ENCODE measurements at regions of chr11 and their contacts with region 1.

Region 1: GRCh38 chr11:85595285-85595884 is 31.8 kb downstream of the DLG2 start:
- DNase-seq: no peak
- ATAC-seq: peak in 1 of 4 donors; percentile 57
- H3K4me3 ChIP-seq: no peak overlapping the region
- H3K27ac ChIP-seq: no peak overlapping the region
- H3K4me1 ChIP-seq: no peaks in the 10 kb centered on the region
- H3K27me3 ChIP-seq: no peaks in the 10 kb centered on the region
- CTCF ChIP-seq: peak; percentile 43 to 78 (median 63)
- POLR2A ChIP-seq: no peak

Region 2: GRCh38 chr11:85464283-85464682 is 131.1 kb before region 1 on chr11:
- intact Hi-C with region 1: loop called in 1 of 10 experiments (anchors 5 kb)
- DNase-seq: no peak
- ATAC-seq: no peak
- H3K4me3 ChIP-seq: no peak overlapping the region
- H3K27ac ChIP-seq: no peak overlapping the region
- H3K4me1 ChIP-seq: no peaks in the 10 kb centered on the region
- H3K27me3 ChIP-seq: no peaks in the 10 kb centered on the region
- CTCF ChIP-seq: peak in 8 of 12 donors; percentile 11 to 49 (median 25)
- POLR2A ChIP-seq: no peak

Region 3: DNA sequence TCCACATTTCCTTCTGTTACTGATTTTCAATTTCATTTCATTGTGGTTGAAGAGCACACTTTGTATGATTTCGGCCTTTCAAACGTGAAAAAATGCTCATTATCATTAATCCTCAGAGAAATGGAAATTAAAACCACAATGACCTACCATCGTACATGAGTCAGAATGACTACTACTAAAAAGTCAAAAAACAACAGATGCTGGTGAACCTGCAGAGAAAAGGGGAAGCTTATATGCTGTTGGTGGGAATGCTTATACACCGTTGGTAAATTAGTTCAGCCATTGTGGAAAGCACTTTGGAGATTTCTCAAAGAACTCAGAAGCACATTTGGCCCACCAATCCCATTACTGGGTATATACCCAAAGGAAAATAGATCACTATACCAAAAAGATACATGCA is 25.9 kb before region 1 on chr11:
- intact Hi-C with region 1: no loop called
- DNase-seq: no peak
- ATAC-seq: no peak
- H3K4me3 ChIP-seq: no peak overlapping the region
- H3K27ac ChIP-seq: no peak overlapping the region
- H3K4me1 ChIP-seq: no peaks in the 10 kb centered on the region
- H3K27me3 ChIP-seq: no peaks in the 10 kb centered on the region
- CTCF ChIP-seq: no peak
- POLR2A ChIP-seq: no peak

Region 4: DNA sequence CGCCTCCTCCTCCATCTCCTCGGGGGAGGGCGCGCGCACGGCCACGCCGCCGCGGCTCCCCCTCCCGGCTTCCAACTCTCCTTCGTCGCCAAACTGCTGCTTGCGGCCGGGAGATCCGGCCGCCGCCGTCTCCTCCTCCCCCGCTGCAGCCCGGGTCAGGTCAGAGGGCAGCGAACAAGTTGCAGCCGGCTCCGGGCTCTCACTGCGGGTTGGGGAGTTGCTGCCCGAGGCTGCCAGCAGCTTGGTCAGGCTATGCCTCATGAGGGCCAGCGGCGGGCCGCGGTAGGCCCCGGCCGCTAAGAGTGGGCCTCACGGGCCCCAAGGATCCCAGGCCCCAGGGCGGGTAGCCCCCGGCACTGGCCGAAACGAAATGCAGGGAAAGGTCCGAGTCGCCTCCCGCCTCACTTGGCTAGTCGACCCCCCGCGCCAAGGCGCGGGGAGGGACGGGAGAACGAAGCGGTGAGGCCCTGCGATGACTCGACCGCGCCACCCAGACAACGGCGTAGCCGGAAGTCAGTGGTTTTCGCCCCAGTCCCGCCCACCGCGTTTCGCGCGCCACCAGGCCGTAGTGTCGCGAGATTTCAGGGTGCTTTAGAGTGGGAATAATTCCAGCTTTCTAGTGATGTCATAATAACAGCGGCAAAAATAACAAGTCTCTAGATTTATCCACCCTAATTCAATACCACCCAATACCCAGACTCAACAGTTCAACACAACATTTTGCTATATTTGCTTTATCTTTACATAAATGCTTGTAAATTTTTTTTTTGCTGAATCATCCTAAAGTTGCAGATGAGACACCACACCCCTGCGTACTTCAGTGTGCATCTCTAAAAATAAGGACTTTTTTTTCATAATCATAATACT is 69.5 kb after region 1 on chr11 and contains the start of gene CREBZF:
- intact Hi-C with region 1: loop called in 1 of 10 experiments (anchors 10 kb)
- DNase-seq: peak; percentile 95 to 97 (median 95)
- ATAC-seq: peak; percentile 93 to 96 (median 96)
- H3K4me3 ChIP-seq: peak within 1 kb of the TSS; percentile 71 to 94 (median 88)
- H3K27ac ChIP-seq: peak within 1 kb of the TSS; percentile 92 to 99 (median 96)
- H3K4me1 ChIP-seq: peaks cover 0 to 42% (median 35%) of the 10 kb centered on the region in 12 donors
- H3K27me3 ChIP-seq: no peaks in the 10 kb centered on the region
- CTCF ChIP-seq: no peak
- POLR2A ChIP-seq: peak in 1 of 2 donors; percentile 95
- total RNA-seq, gene CREBZF: 11.8 to 17.8 (median 12.9) TPM

Region 5: GRCh38 chr11:85810871-85811611 is 215.7 kb after region 1 on chr11 and contains the start of gene SYTL2:
- intact Hi-C with region 1: loop called in 1 of 10 experiments (anchors 10 kb)
- DNase-seq: peak; percentile 74 to 90 (median 81)
- ATAC-seq: peak; percentile 91 to 99 (median 98)
- H3K4me3 ChIP-seq: peak within 1 kb of the TSS; percentile 22 to 87 (median 66)
- H3K27ac ChIP-seq: peak within 1 kb of the TSS in 6 of 12 donors; percentile 13 to 49 (median 34)
- H3K4me1 ChIP-seq: peaks cover 0 to 20% (median 8%) of the 10 kb centered on the region in 12 donors
- H3K27me3 ChIP-seq: peaks cover 0 to 4% (median 0%) of the 10 kb centered on the region in 9 donors
- CTCF ChIP-seq: peak in 4 of 12 donors; percentile 11 to 38 (median 22)
- POLR2A ChIP-seq: peak in 1 of 2 donors; percentile 87
- total RNA-seq, gene SYTL2: 2.2 to 9.5 (median 6.3) TPM

Region 6: DNA sequence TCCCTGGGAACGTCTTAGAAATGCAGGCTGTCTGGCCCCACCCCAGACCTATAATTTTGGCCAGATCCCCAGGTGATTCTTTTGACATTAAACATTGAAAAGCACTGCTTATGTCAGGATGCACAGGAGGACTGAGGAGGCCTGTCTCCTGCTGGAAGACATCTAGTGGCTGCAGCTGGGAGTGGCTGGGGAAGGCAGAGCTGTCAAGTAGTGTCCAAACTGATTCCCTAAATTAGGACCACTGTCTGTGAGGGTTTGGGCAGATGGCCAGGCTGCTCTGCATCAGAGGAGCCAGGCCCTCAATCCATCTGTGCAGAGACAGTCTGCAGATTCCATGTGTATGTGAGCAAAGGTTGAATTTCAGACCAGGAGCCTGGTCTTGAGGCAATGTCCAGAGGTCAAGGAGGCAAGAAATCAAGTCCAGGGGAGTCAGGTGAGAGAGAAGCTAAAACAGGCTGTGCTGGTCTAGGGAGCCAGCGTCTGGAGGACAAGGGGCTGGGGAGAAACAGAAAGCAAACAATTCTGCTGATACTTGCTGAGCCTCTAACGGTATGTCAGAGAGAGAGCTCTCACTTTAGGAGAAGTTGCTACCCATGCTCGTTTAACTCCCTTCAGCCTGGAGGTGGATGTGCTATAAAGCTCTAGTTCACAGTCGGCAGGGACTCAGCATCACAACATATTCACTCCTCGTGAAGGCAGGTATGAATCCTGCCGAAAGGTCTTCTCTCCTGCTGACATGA is 230.9 kb after region 1 on chr11:
- intact Hi-C with region 1: loop called in 8 of 10 experiments (anchors 5 to 10 kb)
- DNase-seq: peak in 4 of 5 donors; percentile 27 to 38 (median 32)
- ATAC-seq: peak in 3 of 4 donors; percentile 68 to 76 (median 74)
- H3K4me3 ChIP-seq: no peak overlapping the region
- H3K27ac ChIP-seq: no peak overlapping the region
- H3K4me1 ChIP-seq: peaks cover 0 to 14% (median 0%) of the 10 kb centered on the region in 12 donors
- H3K27me3 ChIP-seq: no peaks in the 10 kb centered on the region
- CTCF ChIP-seq: peak; percentile 27 to 60 (median 52)
- POLR2A ChIP-seq: no peak

Region 7: GRCh38 chr11:85941380-85941973 is 346.1 kb after region 1 on chr11:
- intact Hi-C with region 1: loop called in 1 of 10 experiments (anchors 10 kb)
- DNase-seq: peak in 2 of 5 donors; percentile 51 to 63
- ATAC-seq: peak in 3 of 4 donors; percentile 79 to 85 (median 83)
- H3K4me3 ChIP-seq: no peak overlapping the region
- H3K27ac ChIP-seq: no peak overlapping the region
- H3K4me1 ChIP-seq: peaks cover 0 to 19% (median 7%) of the 10 kb centered on the region in 12 donors
- H3K27me3 ChIP-seq: no peaks in the 10 kb centered on the region
- CTCF ChIP-seq: peak; percentile 63 to 85 (median 78)
- POLR2A ChIP-seq: no peak

Region 8: DNA sequence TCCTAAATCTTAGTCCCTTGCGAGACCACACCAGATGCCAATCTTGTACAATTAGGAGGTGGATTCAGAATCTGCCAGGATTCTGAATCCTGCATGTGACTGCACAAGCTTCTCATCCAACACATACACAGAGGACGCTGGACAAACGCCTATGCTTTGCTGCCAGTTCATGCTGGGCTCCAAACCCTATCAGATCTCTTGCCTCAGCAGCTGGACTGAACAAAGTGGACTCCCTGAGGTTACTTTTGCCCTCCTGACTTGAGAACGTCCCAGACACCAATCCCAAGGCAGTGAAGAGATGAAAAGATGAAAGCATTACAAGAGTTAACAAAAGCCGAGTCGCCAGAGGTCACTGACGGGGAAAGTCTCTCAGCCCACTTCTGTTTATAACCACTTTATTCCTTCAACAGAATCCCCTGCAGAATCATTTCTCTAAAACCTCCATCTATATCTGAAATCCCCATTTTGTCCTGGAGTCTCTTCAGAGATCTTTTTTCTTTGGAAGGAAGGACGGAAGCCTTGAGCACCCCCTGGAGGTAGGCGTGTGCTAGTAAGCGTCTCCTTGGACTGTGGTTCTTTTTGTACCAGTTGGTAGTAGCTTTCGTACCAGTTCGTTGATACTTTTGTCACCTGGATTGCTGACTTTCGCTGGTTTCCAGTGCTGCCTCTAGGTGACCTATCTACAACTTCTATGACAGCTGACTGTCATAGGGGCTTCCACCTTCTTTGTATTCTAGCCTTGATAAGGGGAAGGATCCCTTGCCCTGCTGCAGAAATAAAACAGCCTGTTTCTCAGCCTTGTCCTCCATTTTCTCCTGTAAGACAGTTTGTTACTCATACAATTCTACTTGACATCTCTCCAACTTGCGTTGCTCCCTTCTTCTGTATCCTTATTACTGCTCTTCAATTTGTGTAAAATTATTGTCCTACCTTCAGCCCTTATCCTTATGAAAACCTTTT is 623.0 kb after region 1 on chr11:
- intact Hi-C with region 1: loop called in 2 of 10 experiments (anchors 10 kb)
- DNase-seq: peak; percentile 55 to 68 (median 65)
- ATAC-seq: peak; percentile 74 to 95 (median 92)
- H3K4me3 ChIP-seq: peak overlapping the region in 10 of 12 donors; percentile 22 to 53 (median 38)
- H3K27ac ChIP-seq: peak overlapping the region in 1 of 12 donors; percentile 15
- H3K4me1 ChIP-seq: peaks cover 0 to 19% (median 4%) of the 10 kb centered on the region in 12 donors
- H3K27me3 ChIP-seq: no peaks in the 10 kb centered on the region
- CTCF ChIP-seq: peak; percentile 85 to 95 (median 93)
- POLR2A ChIP-seq: no peak

Region 9: GRCh38 chr11:86341382-86341781 is 746.0 kb after region 1 on chr11:
- intact Hi-C with region 1: no loop called
- DNase-seq: no peak
- ATAC-seq: no peak
- H3K4me3 ChIP-seq: no peak overlapping the region
- H3K27ac ChIP-seq: no peak overlapping the region
- H3K4me1 ChIP-seq: no peaks in the 10 kb centered on the region
- H3K27me3 ChIP-seq: no peaks in the 10 kb centered on the region
- CTCF ChIP-seq: no peak
- POLR2A ChIP-seq: no peak

Measured in heart left ventricle (tissue), 16 donors.